ENCODE measurements at regions of chr5 and their contacts with region 1.

Region 1: GRCh38 chr5:51382763-51383490 is at the start of gene ISL1:
- ATAC-seq: peak; percentile 85 to 94 (median 92)
- H3K4me3 ChIP-seq: peak within 1 kb of the TSS; percentile 36 to 55 (median 44)
- H3K27ac ChIP-seq: peak within 1 kb of the TSS in 1 of 2 donors; percentile 22
- H3K4me1 ChIP-seq: peaks cover 5 to 13% of the 10 kb centered on the region in 2 donors
- total RNA-seq, gene ISL1: 0.49 to 41.6 (median 10.3) TPM in 7 of 8 experiments, not detected in the other

Region 2: GRCh38 chr5:51829691-51830090 is 446.8 kb after region 1 on chr5:
- in situ Hi-C with region 1: no loop called
- ATAC-seq: no peak
- H3K4me3 ChIP-seq: no peak overlapping the region
- H3K27ac ChIP-seq: no peak overlapping the region
- H3K4me1 ChIP-seq: no peaks in the 10 kb centered on the region

Region 3: DNA sequence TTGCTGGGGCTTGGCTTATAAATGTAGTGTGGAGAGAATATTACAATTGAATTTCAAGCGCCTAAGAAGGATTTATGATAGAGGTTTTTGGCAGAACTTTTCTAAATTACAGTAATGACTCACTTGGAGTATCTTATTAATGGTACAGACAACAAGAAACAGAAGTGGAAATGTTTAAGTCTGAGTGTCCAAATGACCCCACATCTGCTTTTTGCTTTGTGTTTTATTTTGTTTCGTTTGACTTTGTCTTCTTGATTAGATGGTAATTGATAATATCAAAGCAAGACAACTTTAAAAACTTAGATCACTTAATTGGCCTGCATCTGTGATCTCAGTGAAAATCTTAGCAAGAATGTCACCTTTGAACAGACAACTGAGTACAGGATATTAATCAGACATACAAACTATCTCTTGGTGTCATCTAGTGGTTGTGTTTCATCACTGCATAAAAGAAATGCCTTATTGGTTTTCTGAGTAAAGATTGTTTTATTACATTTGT is 577.7 kb after region 1 on chr5:
- in situ Hi-C with region 1: loop called in 1 of 9 experiments (anchors 25 kb)
- ATAC-seq: peak in 7 of 8 experiments; percentile 28 to 72 (median 61)
- H3K4me3 ChIP-seq: no peak overlapping the region
- H3K27ac ChIP-seq: no peak overlapping the region
- H3K4me1 ChIP-seq: peaks cover 0 to 4% of the 10 kb centered on the region in 2 donors

Region 4: DNA sequence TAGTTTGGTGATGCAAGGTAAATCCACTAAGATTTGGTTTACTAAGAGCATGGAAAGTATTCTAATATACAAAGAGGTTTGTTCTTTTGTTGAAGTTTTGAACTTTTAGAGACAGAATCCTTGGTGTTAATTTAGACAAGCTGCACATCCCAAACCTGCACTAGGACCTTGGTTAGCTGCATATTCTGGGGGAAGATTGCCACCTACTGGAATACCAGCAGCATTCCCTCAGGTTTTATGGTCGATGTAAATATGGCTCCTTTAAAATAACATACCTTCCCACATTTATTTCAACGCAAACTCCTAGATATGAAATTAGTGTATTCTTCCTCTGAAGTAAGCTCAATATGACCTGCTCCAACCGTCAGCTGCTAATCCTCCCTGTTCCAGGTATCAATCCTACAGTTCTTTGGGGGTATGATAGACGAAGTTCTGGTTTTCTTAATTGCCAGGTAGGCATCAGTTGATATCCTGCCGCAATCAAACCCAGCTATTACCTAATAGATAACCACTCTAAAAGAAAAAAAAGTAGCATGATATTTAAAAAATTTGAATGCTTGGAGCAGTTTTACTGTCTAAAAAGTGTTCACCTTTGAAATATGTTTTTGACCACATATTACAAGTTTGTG is 624.4 kb after region 1 on chr5:
- in situ Hi-C with region 1: loop called in 2 of 9 experiments (anchors 10 to 25 kb)
- ATAC-seq: peak; percentile 62 to 91 (median 68)
- H3K4me3 ChIP-seq: no peak overlapping the region
- H3K27ac ChIP-seq: no peak overlapping the region
- H3K4me1 ChIP-seq: peaks cover 0 to 11% of the 10 kb centered on the region in 2 donors

Region 5: GRCh38 chr5:52356311-52356918 is 973.5 kb after region 1 on chr5:
- in situ Hi-C with region 1: loop called in 1 of 9 experiments (anchors 25 kb)
- ATAC-seq: no peak
- H3K4me3 ChIP-seq: no peak overlapping the region
- H3K27ac ChIP-seq: no peak overlapping the region
- H3K4me1 ChIP-seq: no peaks in the 10 kb centered on the region